Tibial artery (tissue), 4 donors: ENCODE measurements at regions of chr5 and their contacts with region 1.

Region 1: GRCh38 chr5:140564196-140565023 is at the starts of genes APBB3 and SLC35A4:
- DNase-seq: peak; percentile 98 to 99
- H3K4me3 ChIP-seq: peak within 1 kb of the TSS; percentile 67 to 77
- H3K27ac ChIP-seq: peak within 1 kb of the TSS; percentile 93 to 94
- H3K4me1 ChIP-seq: peaks cover 0 to 60% (median 40%) of the 10 kb centered on the region in 4 donors
- H3K27me3 ChIP-seq: no peaks in the 10 kb centered on the region
- CTCF ChIP-seq: peak in 1 of 2 experiments; percentile 16

Region 2: DNA sequence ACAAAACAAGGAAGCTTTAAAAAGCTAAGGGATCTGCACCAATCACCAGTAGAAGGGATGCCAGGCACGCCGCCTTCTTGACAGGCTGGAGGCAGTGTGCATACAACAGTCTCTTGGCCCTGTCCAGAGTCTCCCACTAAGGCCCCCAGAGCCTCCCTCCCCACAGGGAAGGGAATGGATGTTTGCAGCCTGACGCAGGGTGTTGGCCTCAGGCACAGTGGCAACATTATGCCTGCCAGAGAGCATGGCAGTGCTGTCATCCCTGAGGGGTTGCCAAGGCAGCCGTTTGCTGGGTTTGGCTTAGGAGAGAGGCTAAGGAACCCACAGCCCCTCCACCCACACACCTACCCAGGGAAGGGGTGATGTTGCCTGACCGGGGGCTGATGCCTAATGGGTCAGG is 222.8 kb before region 1 on chr5:
- intact Hi-C with region 1: no loop called
- DNase-seq: peak; percentile 43 to 86
- H3K4me3 ChIP-seq: no peak overlapping the region
- H3K27ac ChIP-seq: peak overlapping the region; percentile 47 to 50
- H3K4me1 ChIP-seq: peaks cover 0 to 52% (median 29%) of the 10 kb centered on the region in 4 donors
- H3K27me3 ChIP-seq: no peaks in the 10 kb centered on the region
- CTCF ChIP-seq: no peak

Region 3: GRCh38 chr5:140639148-140639979 is 75.0 kb after region 1 on chr5 and contains the start of gene TMCO6:
- intact Hi-C with region 1: loop called (anchors 2 kb)
- DNase-seq: peak; percentile 98 to 99
- H3K4me3 ChIP-seq: peak within 1 kb of the TSS; percentile 59 to 84
- H3K27ac ChIP-seq: peak within 1 kb of the TSS; percentile 81 to 84
- H3K4me1 ChIP-seq: peaks cover 0 to 37% (median 9%) of the 10 kb centered on the region in 4 donors
- H3K27me3 ChIP-seq: no peaks in the 10 kb centered on the region
- CTCF ChIP-seq: peak; percentile 65 to 69

Region 4: GRCh38 chr5:140710899-140711552 is 146.6 kb after region 1 on chr5:
- intact Hi-C with region 1: loop called (anchors 10 kb)
- DNase-seq: peak; percentile 90
- H3K4me3 ChIP-seq: peak overlapping the region; percentile 57 to 63
- H3K27ac ChIP-seq: peak overlapping the region; percentile 84 to 94
- H3K4me1 ChIP-seq: peaks cover 0 to 9% (median 1%) of the 10 kb centered on the region in 4 donors
- H3K27me3 ChIP-seq: no peaks in the 10 kb centered on the region
- CTCF ChIP-seq: no peak